ENCODE measurements at regions of chr2 and their contacts with region 1.

Region 1: DNA sequence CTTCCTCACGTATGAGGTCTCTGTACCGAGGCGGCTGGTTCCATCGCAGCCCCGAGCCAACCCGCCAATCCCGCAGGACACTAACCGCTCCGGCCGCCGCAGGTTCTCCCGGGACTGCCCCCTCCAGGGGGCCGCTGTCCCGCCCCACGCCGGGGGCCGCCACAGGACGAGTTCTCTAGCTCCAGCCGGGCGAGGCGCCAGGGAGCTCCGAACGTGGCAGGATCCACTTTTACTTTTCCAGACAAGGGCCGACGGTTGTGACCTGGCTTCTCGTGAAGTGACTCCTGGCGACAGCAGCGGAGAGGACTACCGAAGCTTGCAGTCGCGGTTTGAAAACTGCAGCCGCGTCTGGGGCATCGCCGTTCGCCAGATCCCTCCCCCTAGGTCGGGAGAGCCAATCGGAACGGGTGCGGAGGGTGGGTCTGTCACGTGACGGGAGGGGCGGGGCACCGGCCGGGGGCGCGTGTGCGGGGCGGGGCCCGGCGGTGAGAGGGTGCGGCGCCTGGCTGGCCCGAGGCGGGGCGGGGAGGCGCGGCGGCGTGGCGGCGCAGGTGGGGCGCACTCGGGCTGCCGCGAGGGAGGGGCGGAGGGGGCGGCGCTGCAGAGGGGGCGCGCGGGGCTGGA is at the start of gene STK17B:
- DNase-seq: peak; percentile 82
- ATAC-seq: peak; percentile 64
- H3K4me3 ChIP-seq: peak within 1 kb of the TSS; percentile 98
- H3K27ac ChIP-seq: peak within 1 kb of the TSS; percentile 87
- H3K4me1 ChIP-seq: peaks cover 15% of the 10 kb centered on the region
- H3K27me3 ChIP-seq: no peaks in the 10 kb centered on the region
- CTCF ChIP-seq: no peak
- EP300 ChIP-seq: 0 out of 4 replicates have a peak, but pooled peaks of 1 of the 2 experiments have one; percentile 34
- POLR2A ChIP-seq: peak; percentile 99
- RAD21 ChIP-seq: peak; percentile 16; the same call in 1 of the 2 replicates
- polyA plus RNA-seq, gene STK17B: 21.2 to 28.2 TPM

Region 2: GRCh38 chr2:196149948-196150347 is 21.4 kb before region 1 on chr2:
- CTCF ChIA-PET with region 1: interaction called, 5 read pairs
- POLR2A ChIA-PET with region 1: interaction called, 10 read pairs
- RAD21 ChIA-PET with region 1: interaction called, 52 read pairs
- SMC1A ChIA-PET with region 1: interaction called, 9 read pairs
- in situ Hi-C with region 1: no loop called
- intact Hi-C with region 1: no loop called
- DNase-seq: no peak
- ATAC-seq: peak; percentile 68
- H3K4me3 ChIP-seq: peak overlapping the region; percentile 24; the same call in 1 of the 2 replicates
- H3K27ac ChIP-seq: peak overlapping the region; percentile 64
- H3K4me1 ChIP-seq: peaks cover 13% of the 10 kb centered on the region
- H3K27me3 ChIP-seq: no peaks in the 10 kb centered on the region
- CTCF ChIP-seq: no peak
- EP300 ChIP-seq: 0 out of 4 replicates have a peak, but pooled peaks of 1 of the 2 experiments have one; percentile 16
- POLR2A ChIP-seq: no peak
- RAD21 ChIP-seq: no peak

Region 3: DNA sequence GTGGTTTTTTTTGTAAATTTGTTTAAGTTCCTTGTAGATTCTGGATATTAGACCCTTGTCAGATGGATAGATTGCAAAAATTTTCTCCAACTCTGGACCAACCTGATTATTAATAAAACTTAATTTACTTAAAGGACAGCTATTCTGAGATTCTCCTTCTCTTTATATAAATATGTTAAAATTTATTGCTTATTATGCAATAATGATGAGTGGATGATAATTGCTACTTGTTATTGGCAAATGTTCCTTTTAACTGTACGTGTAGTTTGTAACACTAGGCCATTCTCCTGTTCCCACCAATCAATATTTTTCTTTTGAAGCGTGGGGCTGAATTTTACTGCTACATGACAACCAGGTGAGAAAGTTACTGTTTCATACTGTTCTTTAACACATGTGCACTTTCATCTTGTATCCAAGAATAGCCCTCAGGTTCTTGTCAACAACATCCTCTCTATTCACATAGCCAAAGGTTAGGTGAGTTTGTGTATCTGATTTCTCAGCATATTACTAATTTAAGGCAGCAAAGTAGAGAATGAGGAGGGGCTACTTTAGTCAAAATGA is 16.6 kb after region 1 on chr2:
- CTCF ChIA-PET with region 1: interaction called, 4 read pairs
- POLR2A ChIA-PET with region 1: interaction called, 22 read pairs
- RAD21 ChIA-PET with region 1: interaction called, 44 read pairs
- SMC1A ChIA-PET with region 1: interaction called, 58 read pairs
- in situ Hi-C with region 1: no loop called
- intact Hi-C with region 1: no loop called
- DNase-seq: no peak
- ATAC-seq: peak; percentile 29; the same call in 2 of the 3 replicates
- H3K4me3 ChIP-seq: no peak overlapping the region
- H3K27ac ChIP-seq: no peak overlapping the region
- H3K4me1 ChIP-seq: peaks cover 7% of the 10 kb centered on the region
- H3K27me3 ChIP-seq: no peaks in the 10 kb centered on the region
- CTCF ChIP-seq: no peak
- EP300 ChIP-seq: 0 out of 4 replicates have a peak, but pooled peaks of 1 of the 2 experiments have one; percentile 14
- POLR2A ChIP-seq: no peak
- RAD21 ChIP-seq: no peak

Region 4: DNA sequence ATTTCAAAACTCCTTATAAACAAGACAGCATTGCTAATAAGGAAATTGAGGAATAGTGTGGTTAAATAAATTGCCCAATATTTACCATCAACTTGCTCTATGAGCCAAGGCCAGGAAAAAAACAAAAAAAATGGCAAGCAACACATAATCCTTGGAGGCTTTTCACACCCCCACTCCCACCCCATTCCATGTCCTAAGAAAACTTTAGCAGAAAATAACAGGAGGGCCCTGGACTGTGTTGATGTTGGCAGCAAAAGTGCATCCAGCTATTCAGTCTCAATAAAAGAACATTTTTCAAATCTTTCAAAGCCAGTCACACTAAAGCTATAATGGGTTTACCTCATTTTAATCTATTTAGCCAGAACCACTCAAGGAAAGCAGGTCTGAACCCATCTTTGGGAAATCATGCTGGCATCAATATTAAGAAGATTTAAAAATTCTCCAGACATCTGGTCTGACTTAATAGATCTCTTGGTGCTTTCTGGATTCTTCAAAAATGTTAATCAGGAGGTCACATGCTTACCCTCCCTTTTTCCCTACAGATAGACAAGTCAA is 34.6 kb after region 1 on chr2:
- CTCF ChIA-PET with region 1: interaction called, 11 read pairs
- POLR2A ChIA-PET with region 1: interaction called, 18 read pairs
- RAD21 ChIA-PET with region 1: interaction called, 34 read pairs
- SMC1A ChIA-PET with region 1: interaction called, 42 read pairs
- in situ Hi-C with region 1: no loop called
- intact Hi-C with region 1: loop called (anchors 2 kb)
- DNase-seq: no peak
- ATAC-seq: no peak
- H3K4me3 ChIP-seq: no peak overlapping the region
- H3K27ac ChIP-seq: no peak overlapping the region
- H3K4me1 ChIP-seq: peaks cover 22% of the 10 kb centered on the region
- H3K27me3 ChIP-seq: no peaks in the 10 kb centered on the region
- CTCF ChIP-seq: no peak
- EP300 ChIP-seq: no peak
- POLR2A ChIP-seq: no peak
- RAD21 ChIP-seq: no peak

Region 5: GRCh38 chr2:196249860-196250259 is 78.5 kb after region 1 on chr2:
- CTCF ChIA-PET with region 1: interaction called, 7 read pairs
- POLR2A ChIA-PET with region 1: interaction called, 8 read pairs
- RAD21 ChIA-PET with region 1: interaction called, 12 read pairs
- SMC1A ChIA-PET with region 1: interaction called, 17 read pairs
- in situ Hi-C with region 1: loop called (anchors 25 kb)
- intact Hi-C with region 1: no loop called
- DNase-seq: no peak
- ATAC-seq: peak; percentile 92
- H3K4me3 ChIP-seq: no peak overlapping the region
- H3K27ac ChIP-seq: no peak overlapping the region
- H3K4me1 ChIP-seq: peaks cover 4% of the 10 kb centered on the region
- H3K27me3 ChIP-seq: no peaks in the 10 kb centered on the region
- CTCF ChIP-seq: no peak
- EP300 ChIP-seq: no peak; a peak in 1 of 4 replicates
- POLR2A ChIP-seq: no peak
- RAD21 ChIP-seq: peak; percentile 10; the same call in 1 of the 2 replicates